Esophagus muscularis mucosa (tissue), 4 donors: ENCODE measurements at regions of chr18 and their contacts with region 1.

Region 1: GRCh38 chr18:22563098-22563707 is 145.5 kb upstream of the CTAGE1 start:
- DNase-seq: no peak
- H3K4me3 ChIP-seq: no peak overlapping the region
- H3K27ac ChIP-seq: no peak overlapping the region
- H3K4me1 ChIP-seq: peaks cover 5 to 30% (median 28%) of the 10 kb centered on the region in 4 donors
- H3K27me3 ChIP-seq: peaks cover 0 to 8% (median 0%) of the 10 kb centered on the region in 4 donors
- CTCF ChIP-seq: peak; percentile 74
- EP300 ChIP-seq: no peak
- POLR2A ChIP-seq: no peak

Region 2: DNA sequence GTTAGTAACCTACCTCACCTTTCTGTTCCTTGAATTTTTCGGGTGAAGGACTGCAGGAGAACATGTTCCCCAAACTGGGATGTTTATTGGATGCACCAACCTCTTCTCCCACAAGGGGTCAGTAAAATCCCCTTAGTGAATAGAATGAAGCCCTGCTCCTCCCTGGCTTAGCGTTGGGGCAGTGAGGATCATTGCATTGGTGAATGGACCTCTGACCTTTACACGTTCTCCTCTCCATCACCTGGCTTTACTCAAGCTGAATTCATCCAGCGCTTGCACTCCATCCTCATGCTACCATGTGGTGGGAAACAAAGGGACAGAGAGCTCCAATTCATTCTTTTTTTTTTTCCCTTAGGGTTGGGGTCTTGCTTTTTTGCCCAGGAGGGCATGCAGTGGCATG is 665.4 kb before region 1 on chr18:
- intact Hi-C with region 1: loop called (anchors 5 kb)
- DNase-seq: no peak
- H3K4me3 ChIP-seq: no peak overlapping the region
- H3K27ac ChIP-seq: no peak overlapping the region
- H3K4me1 ChIP-seq: peaks cover 0 to 16% (median 11%) of the 10 kb centered on the region in 4 donors
- H3K27me3 ChIP-seq: peaks cover 0 to 7% (median 0%) of the 10 kb centered on the region in 4 donors
- CTCF ChIP-seq: peak; percentile 27 to 73 (median 57)
- EP300 ChIP-seq: no peak
- POLR2A ChIP-seq: no peak

Region 3: DNA sequence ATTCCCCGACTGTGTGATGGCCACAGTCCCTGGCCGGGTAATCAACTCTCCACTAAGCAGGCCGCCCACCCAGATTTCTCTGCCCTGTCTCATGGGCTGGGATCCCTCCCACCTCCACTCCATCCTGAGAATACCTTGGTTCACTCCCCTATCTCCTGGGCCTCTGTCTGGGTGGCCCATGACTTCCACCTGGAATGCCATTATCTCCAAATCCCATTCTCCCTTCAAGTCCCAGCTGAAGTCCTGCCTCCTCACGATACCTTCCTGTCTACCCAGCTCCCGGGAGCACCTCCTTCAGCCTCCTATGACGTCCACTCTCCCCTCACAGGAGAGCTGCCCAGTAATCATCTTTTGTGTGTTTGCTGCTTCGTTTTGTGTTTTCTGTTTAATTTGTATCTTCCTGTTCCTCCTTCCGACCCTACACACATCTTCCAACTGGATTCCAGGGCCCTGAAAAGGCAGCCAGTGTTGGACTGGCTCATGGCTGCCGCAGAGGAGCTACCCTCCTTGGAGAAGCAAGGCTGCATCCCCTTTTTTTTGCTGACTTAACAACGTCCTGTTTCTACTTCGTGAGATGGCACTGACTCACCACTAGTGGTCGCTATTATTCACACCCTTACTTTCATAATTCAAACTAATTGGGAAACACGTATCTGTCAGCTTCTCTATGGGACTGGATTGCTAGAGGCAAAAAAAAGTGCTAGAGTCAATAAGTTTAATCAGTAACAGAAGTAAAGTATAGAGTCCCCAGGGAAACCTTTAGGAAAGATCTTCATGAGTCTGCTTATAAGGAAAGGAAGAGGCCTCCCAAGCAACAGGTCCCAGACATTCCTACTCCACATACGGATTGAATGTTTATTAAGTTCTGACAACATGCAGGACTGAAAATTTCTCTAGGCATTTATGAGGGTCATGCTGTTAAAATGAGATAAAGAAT is 565.7 kb before region 1 on chr18:
- intact Hi-C with region 1: loop called (anchors 5 kb)
- DNase-seq: no peak
- H3K4me3 ChIP-seq: no peak overlapping the region
- H3K27ac ChIP-seq: peak overlapping the region in 1 of 4 donors; percentile 1
- H3K4me1 ChIP-seq: no peaks in the 10 kb centered on the region
- H3K27me3 ChIP-seq: no peaks in the 10 kb centered on the region
- CTCF ChIP-seq: peak; percentile 54 to 77 (median 63)
- EP300 ChIP-seq: no peak
- POLR2A ChIP-seq: no peak

Region 4: GRCh38 chr18:22169007-22169864 is 394.0 kb before region 1 on chr18 and contains the start of gene GATA6:
- intact Hi-C with region 1: loop called (anchors 2 kb)
- DNase-seq: no peak
- H3K4me3 ChIP-seq: peak within 1 kb of the TSS; percentile 68 to 85 (median 80)
- H3K27ac ChIP-seq: peak within 1 kb of the TSS; percentile 86 to 93 (median 88)
- H3K4me1 ChIP-seq: peaks cover 9 to 80% (median 74%) of the 10 kb centered on the region in 4 donors
- H3K27me3 ChIP-seq: peaks cover 0 to 97% (median 45%) of the 10 kb centered on the region in 4 donors
- CTCF ChIP-seq: peak; percentile 55 to 61 (median 57)
- EP300 ChIP-seq: no peak
- POLR2A ChIP-seq: peak; percentile 35
- total RNA-seq, gene GATA6: 6.6 to 35.5 (median 12.5) TPM

Region 5: GRCh38 chr18:22257022-22257543 is 306.1 kb before region 1 on chr18:
- intact Hi-C with region 1: no loop called
- DNase-seq: no peak
- H3K4me3 ChIP-seq: no peak overlapping the region
- H3K27ac ChIP-seq: no peak overlapping the region
- H3K4me1 ChIP-seq: peaks cover 0 to 3% (median 0%) of the 10 kb centered on the region in 4 donors
- H3K27me3 ChIP-seq: no peaks in the 10 kb centered on the region
- CTCF ChIP-seq: no peak
- EP300 ChIP-seq: no peak
- POLR2A ChIP-seq: no peak

Region 6: DNA sequence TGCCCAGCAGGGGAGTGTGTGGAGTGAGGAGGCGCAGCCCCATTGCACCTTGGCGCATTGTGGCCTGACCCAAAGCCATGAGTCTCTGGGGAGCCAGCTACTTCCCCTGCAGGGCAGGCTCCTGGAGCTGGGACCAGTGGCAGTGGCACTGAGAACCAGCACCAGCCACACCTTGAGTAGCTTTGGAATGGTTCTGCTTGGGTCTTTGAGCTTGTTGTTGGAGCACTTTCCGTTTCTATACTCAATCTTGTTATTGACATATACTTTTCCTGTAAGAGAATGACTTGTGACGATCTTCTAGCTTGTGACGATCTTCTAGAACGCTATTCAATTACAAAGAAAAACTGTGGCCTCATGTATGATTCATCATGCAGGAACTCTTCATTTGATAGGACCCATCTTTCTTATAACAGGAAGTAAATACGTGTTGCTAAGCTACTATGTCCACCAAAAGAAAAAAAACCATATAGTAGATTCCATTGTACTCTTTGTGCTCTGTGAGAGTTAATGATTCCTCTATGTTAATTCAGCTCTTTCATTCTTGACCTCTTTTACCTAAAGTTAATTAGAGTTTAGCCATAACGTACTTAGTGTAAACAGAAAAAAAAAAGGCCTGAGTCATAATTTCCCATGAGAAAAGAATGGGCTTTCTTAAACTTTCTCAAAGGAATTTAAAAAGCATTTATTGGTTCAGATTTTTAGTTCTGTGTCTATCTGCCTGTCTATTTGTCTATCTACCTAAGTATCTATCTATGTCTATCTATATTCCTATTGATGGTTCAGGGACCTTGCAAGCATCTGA is 280.7 kb before region 1 on chr18:
- intact Hi-C with region 1: loop called (anchors 5 kb)
- DNase-seq: no peak
- H3K4me3 ChIP-seq: no peak overlapping the region
- H3K27ac ChIP-seq: peak overlapping the region in 3 of 4 donors; percentile 3 to 45 (median 8)
- H3K4me1 ChIP-seq: peaks cover 0 to 24% (median 9%) of the 10 kb centered on the region in 4 donors
- H3K27me3 ChIP-seq: no peaks in the 10 kb centered on the region
- CTCF ChIP-seq: no peak
- EP300 ChIP-seq: no peak
- POLR2A ChIP-seq: no peak

Region 7: DNA sequence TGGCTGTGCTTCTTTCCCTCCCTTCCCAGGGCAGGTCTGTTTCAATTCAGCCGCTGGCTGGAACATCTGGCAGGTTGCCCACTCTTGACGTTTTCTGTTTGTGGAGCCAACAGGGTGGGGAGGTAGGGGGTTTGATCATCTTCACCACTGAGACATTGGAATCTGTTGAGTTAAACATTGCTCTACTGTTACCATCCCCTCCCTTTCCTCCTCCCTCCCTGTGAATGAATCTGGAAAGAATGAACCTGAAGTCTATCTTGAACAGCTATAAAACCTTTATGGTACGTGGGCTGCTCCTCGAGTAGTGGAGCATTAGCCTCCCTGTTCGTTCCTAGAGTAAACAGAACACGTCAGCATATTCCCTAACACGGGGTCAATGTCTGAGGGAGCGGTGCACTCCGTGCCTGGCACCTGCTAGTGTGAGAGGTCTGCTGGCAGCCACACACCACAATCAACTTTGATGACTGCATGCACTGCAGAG is 120.0 kb after region 1 on chr18:
- intact Hi-C with region 1: loop called (anchors 10 kb)
- DNase-seq: no peak
- H3K4me3 ChIP-seq: peak overlapping the region in 2 of 4 donors; percentile 2 to 4
- H3K27ac ChIP-seq: peak overlapping the region; percentile 18 to 57 (median 40)
- H3K4me1 ChIP-seq: peaks cover 14 to 34% (median 25%) of the 10 kb centered on the region in 4 donors
- H3K27me3 ChIP-seq: no peaks in the 10 kb centered on the region
- CTCF ChIP-seq: no peak
- EP300 ChIP-seq: no peak
- POLR2A ChIP-seq: no peak

Region 8: GRCh38 chr18:22946217-22946616 is 383.0 kb after region 1 on chr18:
- intact Hi-C with region 1: no loop called
- DNase-seq: no peak
- H3K4me3 ChIP-seq: no peak overlapping the region
- H3K27ac ChIP-seq: no peak overlapping the region
- H3K4me1 ChIP-seq: peaks cover 0 to 3% (median 0%) of the 10 kb centered on the region in 4 donors
- H3K27me3 ChIP-seq: no peaks in the 10 kb centered on the region
- CTCF ChIP-seq: no peak
- EP300 ChIP-seq: no peak
- POLR2A ChIP-seq: no peak